ENCODE measurements at regions of chrX and their contacts with region 1.

Region 1: GRCh38 chrX:130984782-130985181 is 73.4 kb upstream of the ARHGAP36 start:
- DNase-seq: no peak
- ATAC-seq: no peak

Region 2: GRCh38 chrX:130746709-130747342 is 238.0 kb before region 1 on chrX:
- intact Hi-C with region 1: no loop called
- DNase-seq: no peak
- ATAC-seq: no peak

Region 3: DNA sequence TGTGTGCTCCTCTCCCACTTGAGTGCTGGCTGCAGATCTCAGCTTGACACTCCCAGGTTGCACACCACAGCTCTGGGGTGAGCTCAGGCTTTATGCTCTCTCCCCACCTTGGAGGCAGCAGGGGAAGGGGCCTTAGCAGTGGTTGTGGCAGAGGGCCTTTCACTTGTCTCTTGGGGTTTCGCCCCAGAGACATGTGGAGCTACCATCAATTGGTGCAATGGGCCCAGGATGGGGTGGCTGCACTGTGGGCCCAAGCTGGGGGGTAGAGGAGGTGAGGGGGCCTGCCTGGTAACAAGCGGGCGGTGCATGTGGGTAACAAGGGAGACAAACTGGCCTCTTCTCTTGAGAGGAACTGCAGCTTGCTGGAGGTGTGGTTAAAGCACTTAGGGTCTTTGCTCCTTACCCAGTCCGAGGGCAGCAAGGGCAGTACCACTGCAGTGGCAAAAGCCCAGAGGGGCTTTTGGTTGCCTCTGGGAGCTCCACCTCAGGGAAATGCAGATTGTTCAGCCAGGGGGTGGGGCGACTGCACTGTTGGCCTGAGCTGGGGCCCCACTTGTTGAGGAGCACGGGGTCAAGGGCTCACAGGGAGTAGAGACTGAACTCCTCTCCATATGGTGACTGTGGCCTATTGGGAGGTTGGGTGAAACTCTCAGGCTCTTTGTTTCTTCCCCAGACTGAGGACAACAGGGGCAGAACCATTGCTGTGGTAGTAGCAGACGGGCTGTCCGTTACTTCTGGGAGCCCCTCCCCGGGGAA is 528.6 kb after region 1 on chrX:
- intact Hi-C with region 1: no loop called
- DNase-seq: no peak
- ATAC-seq: no peak

Region 4: GRCh38 chrX:131633285-131633917 is 648.6 kb after region 1 on chrX:
- intact Hi-C with region 1: loop called in 1 of 2 experiments (anchors 5 kb)
- DNase-seq: peak; percentile 26 to 53
- ATAC-seq: peak; percentile 77